ENCODE measurements at regions of chr5 and their contacts with region 1.

Region 1: DNA sequence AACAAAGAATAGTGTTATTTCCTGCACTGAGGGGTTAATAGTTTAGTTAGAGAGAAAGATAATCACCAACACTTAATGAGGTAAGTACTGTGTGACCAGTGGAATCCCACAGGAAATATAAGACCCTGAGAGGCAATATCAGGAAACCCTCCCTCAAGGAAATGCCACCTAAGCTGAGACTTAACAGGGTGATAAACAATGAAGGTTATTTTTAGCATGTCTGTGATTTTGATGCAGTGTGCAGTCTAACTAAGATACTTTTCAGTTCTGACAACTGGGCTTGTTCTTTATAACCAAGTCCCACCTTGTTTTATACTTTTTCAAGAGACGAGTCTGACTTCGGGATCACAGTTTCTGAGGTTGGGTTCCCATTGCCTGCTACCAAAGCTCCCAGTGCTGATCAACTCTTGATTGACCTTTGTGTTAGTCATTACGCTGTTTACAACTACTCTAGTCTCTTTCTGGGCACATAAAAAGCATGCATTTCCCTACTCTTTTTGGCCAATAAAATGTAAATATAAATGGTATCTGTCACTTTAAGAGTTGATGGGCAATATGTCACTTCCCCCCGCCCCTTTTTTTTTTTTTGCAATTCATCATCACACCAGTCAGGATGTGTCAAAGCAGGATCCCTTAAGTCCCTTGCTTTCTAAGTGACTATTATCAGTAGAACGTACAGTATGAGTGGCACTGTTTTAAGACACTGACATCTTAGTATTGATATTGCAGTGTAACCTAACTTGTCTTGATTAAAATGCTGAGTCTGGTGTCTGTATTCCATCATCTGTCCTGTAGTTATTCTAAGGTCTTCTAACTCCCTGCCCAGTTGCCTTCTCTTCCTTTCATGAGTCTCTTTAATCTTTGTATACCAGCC is 31.4 kb downstream of the C6 start:
- DNase-seq: no peak
- H3K4me3 Mint-ChIP-seq: peak overlapping the region; percentile 45
- H3K27ac Mint-ChIP-seq: peak overlapping the region; percentile 43
- H3K4me1 Mint-ChIP-seq: peaks cover 26% of the 10 kb centered on the region
- H3K27me3 Mint-ChIP-seq: no peaks in the 10 kb centered on the region
- CTCF ChIP-seq: no peak

Region 2: GRCh38 chr5:40755407-40756365 is 426.2 kb before region 1 on chr5 and contains the start of gene TTC33:
- CTCF ChIA-PET with region 1: no interaction called
- intact Hi-C with region 1: loop called (anchors 10 kb)
- DNase-seq: peak; percentile 95
- H3K4me3 Mint-ChIP-seq: no peak within 1 kb of the TSS
- H3K27ac Mint-ChIP-seq: no peak within 1 kb of the TSS
- H3K4me1 Mint-ChIP-seq: no peaks in the 10 kb centered on the region
- H3K27me3 Mint-ChIP-seq: no peaks in the 10 kb centered on the region
- CTCF ChIP-seq: peak; percentile 45
- total RNA-seq, gene TTC33: 11.3 and 14.0 TPM in 2 replicates

Region 3: DNA sequence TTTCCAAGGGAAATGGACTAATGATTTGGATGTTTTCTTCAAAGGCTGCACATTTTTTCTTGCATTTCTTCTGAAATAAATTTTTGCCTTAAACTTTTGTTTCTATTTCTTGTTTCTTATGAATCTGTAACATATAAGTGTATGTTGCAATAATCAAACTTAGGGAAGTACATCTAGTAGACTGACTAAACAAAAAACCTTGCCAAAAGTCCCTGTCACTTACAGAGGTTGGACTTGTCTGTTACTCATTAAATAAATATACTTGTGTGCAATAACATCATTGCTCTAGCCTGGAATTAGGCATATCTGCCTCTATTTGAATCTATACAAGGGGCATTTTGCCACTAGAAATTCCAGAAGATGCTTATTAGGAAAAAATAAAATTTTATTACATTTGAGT is 25.2 kb before region 1 on chr5:
- CTCF ChIA-PET with region 1: no interaction called
- intact Hi-C with region 1: loop called (anchors 1 kb)
- DNase-seq: no peak
- H3K4me3 Mint-ChIP-seq: no peak overlapping the region
- H3K27ac Mint-ChIP-seq: no peak overlapping the region
- H3K4me1 Mint-ChIP-seq: peaks cover 9% of the 10 kb centered on the region
- H3K27me3 Mint-ChIP-seq: no peaks in the 10 kb centered on the region
- CTCF ChIP-seq: no peak

Region 4: DNA sequence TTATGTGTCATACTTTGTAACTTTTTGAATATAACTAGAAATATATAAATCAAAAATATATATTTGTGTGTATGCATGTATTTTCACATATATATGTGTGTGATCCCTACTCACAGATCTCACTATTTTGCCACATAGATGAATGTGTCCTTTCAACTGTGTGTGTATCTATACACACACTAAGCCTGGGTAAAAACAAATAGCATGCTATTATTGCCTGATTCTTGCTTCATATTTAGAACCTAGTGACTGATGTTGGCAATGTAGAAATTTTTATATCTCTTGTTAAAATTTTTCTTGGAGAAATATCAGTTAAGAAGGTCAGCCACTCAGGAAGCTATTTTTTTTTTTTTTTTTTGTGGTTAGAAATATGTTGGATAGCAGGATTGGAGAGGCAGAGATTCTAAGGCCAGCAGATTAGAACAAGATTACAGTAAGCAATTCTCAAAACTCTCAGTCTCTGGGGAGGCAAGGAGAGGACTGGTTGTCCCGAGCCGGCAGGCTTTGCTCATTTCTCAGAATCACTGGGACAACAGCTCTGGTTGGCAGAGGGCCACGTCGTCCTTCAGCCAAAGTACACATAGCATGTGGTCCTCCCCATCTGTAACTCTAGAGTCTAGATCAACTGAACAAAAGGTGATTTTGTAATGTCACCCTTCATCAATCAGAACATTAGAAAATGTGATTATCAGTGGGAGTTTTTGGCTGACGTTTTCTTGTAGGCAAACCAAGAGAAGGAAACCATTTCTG is 11.7 kb after region 1 on chr5:
- CTCF ChIA-PET with region 1: interaction called, 15 read pairs
- intact Hi-C with region 1: no loop called
- DNase-seq: peak; percentile 74
- H3K4me3 Mint-ChIP-seq: no peak overlapping the region
- H3K27ac Mint-ChIP-seq: no peak overlapping the region
- H3K4me1 Mint-ChIP-seq: peaks cover 19% of the 10 kb centered on the region
- H3K27me3 Mint-ChIP-seq: peaks cover 13% of the 10 kb centered on the region
- CTCF ChIP-seq: no peak

Region 5: GRCh38 chr5:41234475-41234874 is 52.5 kb after region 1 on chr5:
- CTCF ChIA-PET with region 1: no interaction called
- intact Hi-C with region 1: loop called (anchors 1 kb)
- DNase-seq: no peak
- H3K4me3 Mint-ChIP-seq: no peak overlapping the region
- H3K27ac Mint-ChIP-seq: no peak overlapping the region
- H3K4me1 Mint-ChIP-seq: peaks cover 28% of the 10 kb centered on the region
- H3K27me3 Mint-ChIP-seq: no peaks in the 10 kb centered on the region
- CTCF ChIP-seq: no peak

Region 6: DNA sequence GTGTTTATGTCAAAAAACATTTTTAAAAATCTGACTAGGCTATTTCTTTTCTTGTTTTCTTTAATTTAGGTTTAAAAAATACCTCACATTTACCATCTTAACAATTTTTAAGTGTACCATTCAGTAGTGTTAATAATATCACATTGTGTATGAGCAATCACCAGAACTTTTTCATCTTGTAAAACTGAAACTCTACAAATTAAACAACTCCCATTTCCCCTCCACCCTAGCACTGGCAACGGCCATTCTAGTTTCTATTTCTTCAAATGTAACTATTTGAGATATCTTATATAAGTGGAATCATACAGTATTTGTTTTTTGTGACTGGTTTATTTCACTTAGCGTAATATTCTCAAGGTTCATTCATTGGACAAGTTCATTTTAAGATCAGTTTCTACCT is 300.8 kb after region 1 on chr5:
- CTCF ChIA-PET with region 1: no interaction called
- intact Hi-C with region 1: no loop called
- DNase-seq: no peak
- H3K4me3 Mint-ChIP-seq: no peak overlapping the region
- H3K27ac Mint-ChIP-seq: no peak overlapping the region
- H3K4me1 Mint-ChIP-seq: no peaks in the 10 kb centered on the region
- H3K27me3 Mint-ChIP-seq: no peaks in the 10 kb centered on the region
- CTCF ChIP-seq: no peak

Region 7: DNA sequence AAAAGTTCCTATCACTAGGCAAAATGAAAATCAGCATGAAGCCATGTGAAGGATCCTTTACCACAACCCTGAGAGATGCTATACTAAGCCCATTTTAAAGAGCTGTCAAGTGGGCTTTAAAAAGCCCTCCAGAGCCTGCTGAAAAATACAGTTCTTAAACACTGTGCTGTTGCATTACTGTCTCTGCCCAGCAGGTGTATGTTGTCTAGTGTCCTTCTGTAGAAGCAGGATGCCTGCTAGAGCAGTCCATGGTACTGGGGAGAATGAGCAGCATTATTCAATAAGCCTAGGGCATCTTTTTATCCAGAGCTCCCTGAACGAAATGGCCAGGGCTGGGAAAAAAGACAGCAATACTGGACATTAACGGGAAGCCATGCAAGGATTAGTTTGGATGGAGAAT is 454.7 kb after region 1 on chr5:
- CTCF ChIA-PET with region 1: no interaction called
- intact Hi-C with region 1: no loop called
- DNase-seq: peak; percentile 10
- H3K4me3 Mint-ChIP-seq: no peak overlapping the region
- H3K27ac Mint-ChIP-seq: no peak overlapping the region
- H3K4me1 Mint-ChIP-seq: no peaks in the 10 kb centered on the region
- H3K27me3 Mint-ChIP-seq: no peaks in the 10 kb centered on the region
- CTCF ChIP-seq: no peak